ENCODE measurements at regions of chr11 and their contacts with region 1.

Region 1: GRCh38 chr11:72642884-72643511 is 31.2 kb downstream of the PDE2A start:
- DNase-seq: peak in 5 of 10 donors; percentile 47 to 81 (median 54)
- H3K4me3 ChIP-seq: peak overlapping the region; percentile 38 to 87 (median 71)
- H3K27ac ChIP-seq: peak overlapping the region in 55 of 59 donors; percentile 5 to 88 (median 73)
- H3K27me3 ChIP-seq: peaks cover 0 to 3% (median 0%) of the 10 kb centered on the region in 45 donors
- CTCF ChIP-seq: peak; percentile 82 to 100 (median 98)

Region 2: DNA sequence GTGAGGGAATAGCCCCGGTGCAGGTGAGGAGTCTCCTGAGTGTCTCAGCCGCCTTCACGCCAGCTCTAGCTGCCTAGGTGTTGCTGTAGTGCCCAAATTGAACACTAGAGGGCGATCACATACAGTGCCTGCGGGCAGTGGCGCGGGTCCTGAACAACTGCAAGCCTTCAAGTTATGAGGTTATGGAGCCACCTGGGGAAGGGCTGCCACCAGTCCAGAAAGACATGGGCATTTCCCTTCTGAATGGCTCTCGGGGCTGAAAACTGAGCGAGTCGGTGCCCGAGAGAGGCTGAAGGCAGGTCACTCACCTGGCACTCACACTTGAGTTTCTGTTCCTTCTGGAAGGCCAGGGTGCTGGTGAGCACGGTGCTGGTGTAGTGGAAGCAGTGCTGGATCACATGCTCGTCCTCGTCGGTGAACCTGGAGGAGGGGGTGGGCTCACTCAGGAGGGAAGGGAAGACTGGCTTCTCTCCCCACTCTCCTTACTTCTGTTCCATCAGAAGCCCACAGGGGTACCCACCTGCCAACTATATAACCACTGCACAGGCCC is 57.2 kb before region 1 on chr11:
- intact Hi-C with region 1: loop called in 1 of 2 experiments (anchors 2 kb)
- DNase-seq: peak in 9 of 10 donors; percentile 54 to 76 (median 67)
- H3K4me3 ChIP-seq: no peak overlapping the region
- H3K27ac ChIP-seq: peak overlapping the region in 6 of 59 donors; percentile 8 to 45 (median 16)
- H3K27me3 ChIP-seq: peaks cover 0 to 15% (median 0%) of the 10 kb centered on the region in 45 donors
- CTCF ChIP-seq: peak; percentile 76 to 98 (median 94)

Region 3: DNA sequence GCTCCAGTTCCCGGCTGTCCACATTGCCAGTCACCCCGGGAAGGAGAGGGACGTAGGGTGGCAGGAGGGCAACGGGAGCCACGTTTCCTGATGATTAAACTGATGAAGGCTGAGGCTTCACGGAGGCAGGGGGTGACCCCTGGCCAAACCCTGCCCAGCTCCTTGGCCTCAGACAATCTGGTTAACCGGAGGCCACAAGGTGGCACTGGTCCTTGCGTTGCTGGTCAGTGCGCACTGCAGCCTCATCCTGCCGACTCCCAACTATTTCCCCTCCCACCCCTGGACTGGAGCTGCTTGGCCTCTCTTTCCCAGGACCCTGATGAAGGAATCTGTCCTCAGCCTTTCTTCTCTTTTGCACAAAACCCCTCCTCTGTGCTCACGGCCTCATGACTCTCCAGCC is 44.1 kb before region 1 on chr11:
- intact Hi-C with region 1: loop called (anchors 2 kb)
- DNase-seq: peak in 6 of 10 donors; percentile 47 to 74 (median 54)
- H3K4me3 ChIP-seq: no peak overlapping the region
- H3K27ac ChIP-seq: peak overlapping the region in 25 of 59 donors; percentile 1 to 66 (median 24)
- H3K27me3 ChIP-seq: no peaks in the 10 kb centered on the region
- CTCF ChIP-seq: peak; percentile 22 to 80 (median 64)

Region 4: GRCh38 chr11:72703267-72704008 is 60.4 kb after region 1 on chr11:
- intact Hi-C with region 1: no loop called
- DNase-seq: peak in 1 of 10 donors; percentile 46
- H3K4me3 ChIP-seq: peak overlapping the region in 1 of 59 donors; percentile 28
- H3K27ac ChIP-seq: peak overlapping the region in 23 of 59 donors; percentile 1 to 65 (median 28)
- H3K27me3 ChIP-seq: no peaks in the 10 kb centered on the region
- CTCF ChIP-seq: no peak

Measured in dorsolateral prefrontal cortex (tissue), 120 donors.